ENCODE measurements at regions of chr2 and their contacts with region 1.

Region 1: GRCh38 chr2:231612179-231613053 is 19.8 kb downstream of the TEX44 start:
- DNase-seq: peak; percentile 92
- ATAC-seq: peak; percentile 50
- H3K4me3 Mint-ChIP-seq: peak overlapping the region; percentile 85
- H3K27ac Mint-ChIP-seq: peak overlapping the region; percentile 96
- H3K4me1 Mint-ChIP-seq: peaks cover 47% of the 10 kb centered on the region
- H3K27me3 Mint-ChIP-seq: no peaks in the 10 kb centered on the region
- CTCF ChIP-seq: peak; percentile 82

Region 2: GRCh38 chr2:231463698-231464575 is 148.5 kb before region 1 on chr2 and contains the start of gene NCL:
- CTCF ChIA-PET with region 1: no interaction called
- POLR2A ChIA-PET with region 1: interaction called, 41 read pairs
- intact Hi-C with region 1: no loop called
- DNase-seq: peak; percentile 71
- ATAC-seq: peak; percentile 54
- H3K4me3 Mint-ChIP-seq: peak within 1 kb of the TSS; percentile 98
- H3K27ac Mint-ChIP-seq: peak within 1 kb of the TSS; percentile 100
- H3K4me1 Mint-ChIP-seq: peaks cover 39% of the 10 kb centered on the region
- H3K27me3 Mint-ChIP-seq: no peaks in the 10 kb centered on the region
- CTCF ChIP-seq: no peak
- total RNA-seq, gene NCL: 693 and 761 TPM in 2 replicates

Region 3: DNA sequence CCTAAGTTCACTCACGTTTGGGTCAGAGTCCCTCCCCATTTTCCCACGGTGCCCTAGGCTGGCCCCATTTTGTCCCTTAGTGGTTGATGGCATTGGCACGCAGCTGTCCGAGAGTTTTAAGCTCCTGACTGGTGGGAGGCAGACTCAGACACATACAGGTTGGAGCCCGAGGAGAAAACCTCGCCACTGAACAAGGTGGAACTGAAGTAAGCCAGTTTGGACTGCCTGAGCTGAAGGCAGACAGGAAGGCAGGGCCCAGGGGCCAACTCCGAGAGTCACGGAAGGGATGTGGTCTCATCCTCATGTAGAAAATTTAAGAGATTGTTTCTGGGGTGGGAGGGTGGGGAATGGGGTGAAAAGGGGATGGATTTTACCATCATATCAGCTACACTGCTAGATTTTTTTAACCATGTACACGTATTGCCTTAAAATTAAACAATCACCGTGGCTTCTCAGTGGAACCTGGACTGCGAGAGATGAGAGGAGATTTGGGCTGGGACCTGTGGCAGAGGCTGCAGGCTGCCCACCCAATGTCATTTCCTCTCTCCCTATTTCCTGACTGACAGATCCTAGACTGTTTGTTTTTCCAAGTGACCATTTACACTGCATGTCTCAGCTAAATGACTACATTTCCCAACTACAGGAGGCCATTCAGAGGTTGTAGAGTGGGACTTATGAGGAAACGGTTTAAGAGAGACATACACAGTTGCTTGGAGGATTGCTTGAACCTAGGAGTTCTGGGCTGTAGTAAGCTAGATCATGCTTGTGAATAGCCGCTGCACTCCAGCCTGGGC is 62.8 kb before region 1 on chr2:
- CTCF ChIA-PET with region 1: no interaction called
- POLR2A ChIA-PET with region 1: no interaction called
- intact Hi-C with region 1: no loop called
- DNase-seq: no peak
- ATAC-seq: no peak
- H3K4me3 Mint-ChIP-seq: no peak overlapping the region
- H3K27ac Mint-ChIP-seq: no peak overlapping the region
- H3K4me1 Mint-ChIP-seq: peaks cover 43% of the 10 kb centered on the region
- H3K27me3 Mint-ChIP-seq: no peaks in the 10 kb centered on the region
- CTCF ChIP-seq: no peak

Region 4: DNA sequence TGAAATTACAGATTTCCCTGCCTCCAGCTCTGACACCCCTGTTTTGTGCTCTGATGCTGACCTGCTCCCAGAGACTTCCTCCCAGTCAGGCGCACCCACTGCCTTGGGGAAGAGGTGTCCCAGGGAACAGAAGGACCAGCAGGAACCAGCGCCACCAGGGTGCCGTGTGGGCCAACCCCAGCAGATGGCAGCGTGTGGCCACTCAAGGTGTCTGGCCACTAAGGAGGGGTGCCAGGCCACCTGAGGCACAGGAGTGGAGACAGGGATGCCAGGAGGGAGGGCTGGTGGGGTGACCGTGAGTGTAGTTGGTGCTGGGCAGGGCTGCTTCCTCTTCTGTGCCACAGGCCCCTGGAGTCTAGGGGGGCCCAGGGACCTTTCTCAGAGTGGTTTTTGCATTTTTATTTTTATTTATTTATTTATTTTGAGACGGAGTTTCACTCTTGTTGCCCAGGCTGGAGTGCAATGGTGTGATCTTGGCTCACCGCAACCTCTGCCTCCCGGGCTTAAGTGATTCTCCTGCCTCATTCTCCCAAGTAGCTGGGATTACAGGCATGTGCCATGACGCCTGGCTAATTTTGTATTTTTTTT is 36.3 kb after region 1 on chr2:
- CTCF ChIA-PET with region 1: interaction called, 12 read pairs
- POLR2A ChIA-PET with region 1: interaction called, 46 read pairs
- intact Hi-C with region 1: loop called (anchors 1 kb)
- DNase-seq: peak; percentile 71
- ATAC-seq: peak; percentile 98
- H3K4me3 Mint-ChIP-seq: no peak overlapping the region
- H3K27ac Mint-ChIP-seq: peak overlapping the region; percentile 63
- H3K4me1 Mint-ChIP-seq: peaks cover 8% of the 10 kb centered on the region
- H3K27me3 Mint-ChIP-seq: no peaks in the 10 kb centered on the region
- CTCF ChIP-seq: no peak

Region 5: GRCh38 chr2:231674587-231675338 is 62.3 kb after region 1 on chr2:
- CTCF ChIA-PET with region 1: interaction called, 269 read pairs
- POLR2A ChIA-PET with region 1: interaction called, 1,242 read pairs
- intact Hi-C with region 1: loop called (anchors 1 kb)
- DNase-seq: peak; percentile 81
- ATAC-seq: peak; percentile 40
- H3K4me3 Mint-ChIP-seq: peak overlapping the region; percentile 64
- H3K27ac Mint-ChIP-seq: peak overlapping the region; percentile 98
- H3K4me1 Mint-ChIP-seq: peaks cover 77% of the 10 kb centered on the region
- H3K27me3 Mint-ChIP-seq: no peaks in the 10 kb centered on the region
- CTCF ChIP-seq: peak; percentile 83

Region 6: DNA sequence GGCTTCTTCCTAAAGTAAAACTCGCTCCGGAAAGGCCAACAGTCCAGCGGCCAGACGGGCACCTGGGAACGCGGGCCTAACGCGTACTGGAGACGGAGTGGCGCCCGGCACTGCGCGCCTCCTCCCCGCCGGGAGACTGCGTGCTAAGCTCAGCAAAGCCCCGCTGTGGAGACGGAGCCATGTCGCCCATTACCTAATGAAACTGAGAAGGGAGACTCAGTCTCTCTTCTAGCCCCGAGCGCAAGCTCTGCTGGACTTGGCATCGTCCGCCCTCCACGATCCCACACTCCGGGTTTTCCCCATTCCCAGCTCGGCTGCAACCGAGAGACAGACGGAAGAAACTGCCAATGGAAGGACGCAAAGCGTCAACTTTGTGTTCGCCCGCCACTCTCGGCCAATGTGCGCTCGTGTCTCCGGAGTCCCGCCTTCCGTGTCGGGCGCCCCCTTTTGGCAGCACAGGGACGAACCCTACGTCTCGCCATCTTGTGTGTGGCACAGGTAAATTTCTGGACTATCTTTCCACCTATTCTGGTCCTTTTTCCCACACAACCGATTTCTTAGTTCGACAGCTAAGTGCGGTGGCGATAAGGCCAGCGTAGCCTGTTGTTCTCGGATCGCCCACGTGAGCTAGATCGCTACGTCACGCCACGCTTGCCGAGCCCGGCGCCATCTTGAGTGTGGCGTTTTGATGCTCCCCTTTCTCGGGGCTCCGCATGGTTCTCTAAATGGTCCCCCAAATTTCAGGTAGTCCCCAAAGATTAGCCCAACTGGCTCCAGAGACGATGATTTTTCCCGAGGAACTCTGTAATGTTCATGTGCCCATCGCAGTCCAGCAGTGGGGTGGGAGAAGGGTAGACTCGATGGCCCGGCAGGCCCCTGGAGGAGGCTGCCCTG is 94.6 kb after region 1 on chr2:
- CTCF ChIA-PET with region 1: interaction called, 118 read pairs
- POLR2A ChIA-PET with region 1: interaction called, 315 read pairs
- intact Hi-C with region 1: loop called (anchors 1 kb)
- DNase-seq: peak; percentile 94
- ATAC-seq: peak; percentile 47
- H3K4me3 Mint-ChIP-seq: peak overlapping the region; percentile 97
- H3K27ac Mint-ChIP-seq: peak overlapping the region; percentile 100
- H3K4me1 Mint-ChIP-seq: peaks cover 36% of the 10 kb centered on the region
- H3K27me3 Mint-ChIP-seq: no peaks in the 10 kb centered on the region
- CTCF ChIP-seq: peak; percentile 84

Region 7: DNA sequence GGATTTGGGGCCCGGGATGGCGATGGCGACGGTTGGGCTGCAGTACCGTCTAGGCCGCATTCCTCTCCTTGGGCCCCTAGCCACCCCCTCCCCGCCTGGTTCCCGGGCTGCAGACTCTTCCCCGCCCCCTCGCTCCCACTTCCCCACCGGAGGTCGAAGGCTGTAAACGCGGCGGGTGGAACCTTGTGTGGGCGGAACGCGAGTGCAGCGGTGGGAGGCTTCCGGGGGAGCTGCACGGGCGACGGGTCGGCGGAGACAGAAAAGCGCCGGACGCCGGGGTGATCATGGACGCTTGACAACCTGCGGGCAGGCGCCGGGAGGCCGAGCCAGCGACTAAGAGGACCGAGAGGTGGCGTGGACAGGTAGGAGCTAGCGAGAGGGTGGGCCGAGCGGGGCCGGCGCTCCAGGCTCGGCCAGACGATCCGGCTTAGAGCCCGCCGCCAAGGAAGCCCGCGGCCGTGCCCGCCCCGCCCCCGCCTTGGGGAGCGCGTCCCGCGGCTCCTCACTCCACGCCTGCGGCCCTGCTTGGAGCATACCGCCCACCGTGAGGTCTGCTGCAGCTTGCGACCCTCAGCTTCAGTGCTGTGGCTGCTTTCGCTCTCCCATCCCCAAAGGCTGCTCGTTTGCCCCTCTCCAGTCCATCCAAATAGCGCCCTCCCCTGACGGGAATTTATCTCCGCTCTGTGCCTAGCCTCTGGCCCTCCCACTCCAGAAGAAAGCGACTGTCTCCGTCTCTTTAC is 173.9 kb after region 1 on chr2 and contains the start of gene COPS7B:
- CTCF ChIA-PET with region 1: interaction called, 6 read pairs
- POLR2A ChIA-PET with region 1: interaction called, 8 read pairs
- intact Hi-C with region 1: loop called (anchors 1 kb)
- DNase-seq: peak; percentile 78
- ATAC-seq: peak; percentile 59
- H3K4me3 Mint-ChIP-seq: peak within 1 kb of the TSS; percentile 92
- H3K27ac Mint-ChIP-seq: peak within 1 kb of the TSS; percentile 82
- H3K4me1 Mint-ChIP-seq: peaks cover 54% of the 10 kb centered on the region
- H3K27me3 Mint-ChIP-seq: no peaks in the 10 kb centered on the region
- CTCF ChIP-seq: no peak
- total RNA-seq, gene COPS7B: 49.9 and 54.5 TPM in 2 replicates

Region 8: DNA sequence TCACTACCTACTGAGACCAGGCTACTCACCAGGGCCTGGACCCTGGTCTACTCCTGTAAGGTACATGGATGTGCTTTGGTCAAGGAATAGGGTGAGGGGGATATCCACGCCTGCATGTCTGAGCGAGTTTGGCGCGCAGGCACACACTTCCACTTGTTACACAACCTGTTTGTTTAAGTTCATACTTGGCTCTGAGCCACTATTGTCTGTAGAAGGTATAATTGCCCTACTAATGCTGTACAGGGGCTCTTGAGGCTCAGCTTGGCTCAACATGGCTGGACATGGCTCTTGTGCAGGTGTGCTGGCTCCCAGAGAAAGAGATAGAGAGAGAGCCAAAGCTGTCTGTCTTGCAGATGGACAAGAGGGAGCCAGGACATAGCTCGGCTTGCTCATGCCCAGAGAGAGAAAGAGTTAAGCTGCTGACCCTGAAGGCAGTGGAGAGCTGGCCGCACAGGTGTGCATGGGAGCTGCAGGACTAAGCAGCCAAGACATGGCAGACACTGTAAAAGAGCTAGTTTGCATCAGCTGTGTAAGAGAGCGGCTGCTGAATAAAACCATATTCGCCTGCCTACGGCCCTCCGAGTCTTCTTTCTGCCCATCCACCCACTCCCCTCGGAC is 278.6 kb after region 1 on chr2:
- CTCF ChIA-PET with region 1: no interaction called
- POLR2A ChIA-PET with region 1: no interaction called
- intact Hi-C with region 1: no loop called
- DNase-seq: no peak
- ATAC-seq: no peak
- H3K4me3 Mint-ChIP-seq: no peak overlapping the region
- H3K27ac Mint-ChIP-seq: no peak overlapping the region
- H3K4me1 Mint-ChIP-seq: no peaks in the 10 kb centered on the region
- H3K27me3 Mint-ChIP-seq: peaks cover 19% of the 10 kb centered on the region
- CTCF ChIP-seq: no peak

Measured in activated B cell treated with CpG ODN at 0.5 μM for 24 hours (primary cell).